Endothelial cell of umbilical vein (primary cell): ENCODE measurements at regions of chr10 and their contacts with region 1.

Region 1: DNA sequence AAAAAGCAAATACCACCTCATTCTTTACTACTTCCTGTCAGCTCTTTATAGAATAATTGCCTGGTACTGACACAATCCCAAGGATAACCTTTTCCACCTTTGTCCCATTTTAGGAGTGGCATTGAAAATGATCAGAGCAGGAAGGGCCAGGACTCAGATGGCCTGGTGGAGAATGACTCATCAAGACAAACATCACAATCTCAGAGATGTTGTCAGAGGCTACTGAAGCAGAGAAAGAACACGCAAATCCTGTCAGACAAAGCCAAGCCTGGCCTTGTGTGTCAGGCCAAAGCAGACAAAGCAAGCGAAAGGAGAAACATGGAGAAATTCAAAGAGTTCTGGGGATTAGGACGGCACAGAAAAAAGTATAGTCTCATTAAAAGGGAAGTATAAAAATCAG is 40.9 kb downstream of the NSUN6 start:
- DNase-seq: peak; percentile 84
- H3K4me3 ChIP-seq: no peak overlapping the region
- H3K27ac ChIP-seq: peak overlapping the region; percentile 91
- H3K4me1 ChIP-seq: peaks cover 35% of the 10 kb centered on the region
- H3K27me3 ChIP-seq: no peaks in the 10 kb centered on the region
- CTCF ChIP-seq: no peak
- POLR2A ChIP-seq: no peak

Region 2: DNA sequence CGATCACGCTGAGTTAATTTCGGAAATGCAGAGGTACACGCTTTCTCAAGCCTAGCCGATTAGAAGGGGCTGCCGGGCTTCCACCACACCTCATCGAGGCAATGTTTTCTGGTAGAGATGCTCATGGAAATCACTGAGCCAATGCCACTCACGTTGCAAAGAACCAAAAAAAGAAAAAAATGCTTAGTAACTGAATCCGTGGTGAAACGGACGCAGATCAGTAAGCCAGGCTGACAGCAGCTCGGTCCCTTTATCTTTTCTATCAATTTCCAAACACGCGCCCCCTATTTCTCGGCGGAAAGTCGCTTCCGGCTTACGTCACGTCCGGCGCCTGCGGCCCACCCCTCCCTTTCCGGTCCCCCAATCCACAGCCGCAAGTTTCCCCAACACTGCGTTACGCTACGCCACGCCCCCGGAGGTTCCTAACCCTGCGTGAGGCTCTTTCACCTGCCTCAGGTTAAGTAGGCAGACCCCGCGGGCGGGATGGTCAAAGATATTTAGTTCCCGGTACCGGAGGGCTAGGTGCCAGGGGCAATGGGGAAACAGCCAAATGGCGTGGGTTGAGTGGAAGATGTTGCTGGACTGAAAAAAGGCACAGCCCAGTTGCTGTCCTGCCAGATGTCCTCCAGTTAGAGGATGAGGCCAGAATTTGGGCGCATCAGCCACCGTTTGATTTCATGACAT is 40.9 kb after region 1 on chr10 and contains the start of gene NSUN6:
- CTCF ChIA-PET with region 1: no interaction called
- POLR2A ChIA-PET with region 1: no interaction called
- dilution Hi-C with region 1: no loop called
- intact Hi-C with region 1: loop called (anchors 1 kb)
- DNase-seq: peak; percentile 84
- H3K4me3 ChIP-seq: peak within 1 kb of the TSS; percentile 62 to 96 (median 91)
- H3K27ac ChIP-seq: peak within 1 kb of the TSS; percentile 83
- H3K4me1 ChIP-seq: peaks cover 21% of the 10 kb centered on the region
- H3K27me3 ChIP-seq: no peaks in the 10 kb centered on the region
- CTCF ChIP-seq: no peak
- POLR2A ChIP-seq: peak; percentile 62
- total RNA-seq, gene NSUN6: 5.2 and 6.5 TPM in 2 replicates

Region 3: DNA sequence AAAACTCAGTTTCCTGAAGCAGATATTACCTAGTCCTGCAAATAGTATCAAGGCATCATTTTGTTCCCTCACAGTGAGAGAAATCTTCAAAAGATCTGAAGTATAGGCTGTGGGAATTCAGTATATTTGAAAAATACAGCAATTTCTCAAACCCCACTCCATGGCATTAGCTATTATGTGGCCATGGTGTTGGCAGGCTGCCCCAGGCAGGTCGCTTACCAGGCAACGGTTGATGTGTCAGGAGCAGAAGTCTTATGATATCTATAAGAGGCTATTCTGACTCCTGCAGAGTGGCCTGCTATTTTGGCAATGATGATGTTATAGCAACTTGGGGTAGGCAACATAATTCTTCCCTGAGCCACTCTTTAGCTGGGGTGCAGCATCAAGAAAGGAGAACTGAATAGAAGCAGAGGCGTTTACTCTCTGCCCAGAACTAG is 1393.6 kb after region 1 on chr10:
- CTCF ChIA-PET with region 1: no interaction called
- POLR2A ChIA-PET with region 1: no interaction called
- dilution Hi-C with region 1: no loop called
- intact Hi-C with region 1: no loop called
- DNase-seq: no peak
- H3K4me3 ChIP-seq: no peak overlapping the region
- H3K27ac ChIP-seq: no peak overlapping the region
- H3K4me1 ChIP-seq: no peaks in the 10 kb centered on the region
- H3K27me3 ChIP-seq: no peaks in the 10 kb centered on the region
- CTCF ChIP-seq: no peak
- POLR2A ChIP-seq: no peak